Activated T-helper 1 cell treated with anti-CD3 and anti-CD28 coated beads, Interleukin-12 subunit alpha, Interleukin-12 subunit beta, Interleukin-2, Interleukin-4 antibody, amounts not matched to agents 30 ng/mL and 10 ng/mL and 1 ng/mL, durations not matched to agents 14 hours and 24 hours and 36 hours (primary cell): ENCODE measurements at regions of chr1 and their contacts with region 1.

Region 1: GRCh38 chr1:63316984-63317816 is 5.2 kb upstream of the FOXD3 start:
- DNase-seq: peak; percentile 42
- H3K4me3 Mint-ChIP-seq: peak overlapping the region; percentile 76
- H3K27ac Mint-ChIP-seq: peak overlapping the region; percentile 58
- H3K4me1 Mint-ChIP-seq: peaks cover 29% of the 10 kb centered on the region
- H3K27me3 Mint-ChIP-seq: peaks cover 63% of the 10 kb centered on the region

Region 2: GRCh38 chr1:62841587-62842169 is 475.5 kb before region 1 on chr1:
- intact Hi-C with region 1: loop called (anchors 5 kb)
- DNase-seq: no peak
- H3K4me3 Mint-ChIP-seq: no peak overlapping the region
- H3K27ac Mint-ChIP-seq: no peak overlapping the region
- H3K4me1 Mint-ChIP-seq: no peaks in the 10 kb centered on the region
- H3K27me3 Mint-ChIP-seq: no peaks in the 10 kb centered on the region

Region 3: DNA sequence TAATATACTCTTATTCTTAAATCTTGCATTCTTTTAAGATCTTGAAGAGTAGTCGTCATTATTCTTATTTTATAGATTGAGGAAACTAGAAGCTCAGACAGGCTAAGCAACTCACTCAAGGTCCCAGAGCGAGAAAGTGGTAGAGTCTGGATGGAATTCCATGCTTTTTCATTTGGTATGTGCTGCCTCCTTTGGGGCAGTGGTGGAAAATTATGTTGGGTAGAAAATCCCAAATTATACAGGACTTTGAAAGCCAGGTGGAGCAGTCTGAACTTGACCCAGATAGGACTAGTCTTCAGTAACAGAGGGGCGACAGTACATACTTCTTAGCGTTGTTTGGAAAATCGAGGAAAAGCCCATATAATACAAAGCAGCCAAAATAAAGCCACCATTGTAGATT is 327.7 kb before region 1 on chr1:
- intact Hi-C with region 1: no loop called
- DNase-seq: no peak
- H3K4me3 Mint-ChIP-seq: no peak overlapping the region
- H3K27ac Mint-ChIP-seq: no peak overlapping the region
- H3K4me1 Mint-ChIP-seq: no peaks in the 10 kb centered on the region
- H3K27me3 Mint-ChIP-seq: peaks cover 5% of the 10 kb centered on the region

Region 4: GRCh38 chr1:63327417-63328139 is 10.4 kb after region 1 on chr1:
- intact Hi-C with region 1: loop called (anchors 1 kb)
- DNase-seq: peak; percentile 37
- H3K4me3 Mint-ChIP-seq: peak overlapping the region; percentile 17
- H3K27ac Mint-ChIP-seq: peak overlapping the region; percentile 72
- H3K4me1 Mint-ChIP-seq: peaks cover 17% of the 10 kb centered on the region
- H3K27me3 Mint-ChIP-seq: peaks cover 78% of the 10 kb centered on the region

Region 5: DNA sequence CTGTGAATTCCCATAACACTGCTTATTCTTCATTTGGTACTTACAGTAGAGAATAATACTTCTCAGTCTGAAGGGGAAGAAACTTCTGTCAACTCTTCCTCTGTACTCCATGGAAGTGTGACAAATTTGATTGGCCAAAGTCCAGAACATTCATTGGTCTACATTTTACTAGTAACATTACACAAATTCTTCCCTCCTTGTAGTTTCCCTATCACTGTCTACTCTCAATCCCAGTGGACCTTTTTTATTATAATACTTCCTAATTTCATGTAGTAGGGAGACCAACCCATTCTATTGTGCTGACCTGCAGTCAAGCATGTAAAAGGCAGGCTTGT is 124.9 kb after region 1 on chr1:
- intact Hi-C with region 1: loop called (anchors 1 kb)
- DNase-seq: no peak
- H3K4me3 Mint-ChIP-seq: no peak overlapping the region
- H3K27ac Mint-ChIP-seq: no peak overlapping the region
- H3K4me1 Mint-ChIP-seq: no peaks in the 10 kb centered on the region
- H3K27me3 Mint-ChIP-seq: no peaks in the 10 kb centered on the region

Region 6: DNA sequence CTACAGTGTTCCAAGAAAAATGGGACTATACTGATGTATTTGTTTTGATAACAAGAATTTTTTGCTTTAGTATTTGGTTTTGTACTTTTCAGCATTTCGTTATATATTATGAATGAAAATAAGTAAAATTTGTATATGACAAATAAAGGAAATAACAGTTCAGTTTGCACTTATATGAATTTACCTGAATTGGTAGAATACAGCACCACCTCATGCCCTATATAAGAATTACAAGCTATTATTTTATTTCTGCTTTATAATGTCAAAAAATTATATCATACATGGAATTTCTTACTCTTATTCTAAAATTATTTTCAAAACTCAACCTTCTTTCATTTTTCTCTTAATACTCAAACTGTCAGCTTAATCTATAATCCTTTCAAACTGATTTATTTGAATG is 220.7 kb after region 1 on chr1:
- intact Hi-C with region 1: loop called (anchors 1 kb)
- DNase-seq: no peak
- H3K4me3 Mint-ChIP-seq: no peak overlapping the region
- H3K27ac Mint-ChIP-seq: no peak overlapping the region
- H3K4me1 Mint-ChIP-seq: no peaks in the 10 kb centered on the region
- H3K27me3 Mint-ChIP-seq: no peaks in the 10 kb centered on the region

Region 7: GRCh38 chr1:63773815-63774616 is 456.8 kb after region 1 on chr1 and contains the start of gene ROR1:
- intact Hi-C with region 1: loop called (anchors 10 kb)
- DNase-seq: peak; percentile 43
- H3K4me3 Mint-ChIP-seq: peak within 1 kb of the TSS; percentile 85
- H3K27ac Mint-ChIP-seq: peak within 1 kb of the TSS; percentile 53
- H3K4me1 Mint-ChIP-seq: peaks cover 22% of the 10 kb centered on the region
- H3K27me3 Mint-ChIP-seq: peaks cover 62% of the 10 kb centered on the region
- total RNA-seq, gene ROR1: 0.05 TPM in 1 of 2 replicates, not detected in the other